Sciatic nerve (tissue), 2 donors: ENCODE measurements at regions of chr4 and their contacts with region 1.

Region 1: DNA sequence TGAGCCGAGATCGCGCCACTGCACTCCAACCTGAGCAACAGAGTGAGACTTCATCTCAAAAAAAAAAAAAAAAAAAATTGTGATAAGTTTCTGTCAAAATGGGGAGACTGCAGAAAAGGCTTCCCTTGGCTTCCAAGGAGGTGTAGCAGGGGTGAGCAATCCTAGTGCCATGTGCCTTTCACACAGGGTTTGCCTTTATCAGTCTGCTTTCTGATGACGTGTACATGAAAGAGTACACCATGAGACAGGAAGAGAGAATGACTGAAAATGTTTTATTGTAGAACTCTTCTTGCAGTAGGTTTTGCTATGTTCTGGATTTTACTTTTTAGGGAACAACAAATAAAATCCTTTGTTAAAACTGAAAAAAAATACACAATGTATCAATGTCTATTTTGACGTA is 23.4 kb upstream of the ZFP42 start:
- DNase-seq: no peak
- ATAC-seq: no peak

Region 2: DNA sequence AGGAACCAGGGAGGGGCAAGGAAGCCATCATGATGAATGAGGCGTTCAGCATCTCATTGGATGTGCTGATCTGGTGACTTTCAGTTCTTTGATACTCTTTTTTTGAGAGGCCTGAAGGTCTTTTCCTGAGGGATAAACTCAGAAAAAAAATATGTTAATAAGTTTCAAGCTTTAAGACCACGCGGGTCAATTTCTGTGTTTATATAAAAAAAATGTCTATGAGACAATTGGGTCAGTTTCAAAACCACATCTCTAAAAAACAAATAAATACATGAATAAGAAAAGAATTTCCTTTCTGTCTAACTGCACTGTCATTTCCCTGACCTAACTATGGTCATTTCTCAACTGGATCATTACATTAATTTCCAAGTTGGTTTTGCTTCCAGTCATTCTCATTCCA is 229.7 kb after region 1 on chr4:
- intact Hi-C with region 1: loop called (anchors 5 kb)
- DNase-seq: no peak
- ATAC-seq: no peak